ENCODE measurements at regions of chr1 and their contacts with region 1.

Region 1: GRCh38 chr1:19430121-19431068 is 54.9 kb downstream of the CAPZB start:
- DNase-seq: peak; percentile 59
- H3K4me3 ChIP-seq: no peak overlapping the region
- H3K27ac ChIP-seq: peak overlapping the region; percentile 23
- H3K4me1 ChIP-seq: peaks cover 23% of the 10 kb centered on the region
- H3K27me3 ChIP-seq: no peaks in the 10 kb centered on the region
- CTCF ChIP-seq: no peak

Region 2: DNA sequence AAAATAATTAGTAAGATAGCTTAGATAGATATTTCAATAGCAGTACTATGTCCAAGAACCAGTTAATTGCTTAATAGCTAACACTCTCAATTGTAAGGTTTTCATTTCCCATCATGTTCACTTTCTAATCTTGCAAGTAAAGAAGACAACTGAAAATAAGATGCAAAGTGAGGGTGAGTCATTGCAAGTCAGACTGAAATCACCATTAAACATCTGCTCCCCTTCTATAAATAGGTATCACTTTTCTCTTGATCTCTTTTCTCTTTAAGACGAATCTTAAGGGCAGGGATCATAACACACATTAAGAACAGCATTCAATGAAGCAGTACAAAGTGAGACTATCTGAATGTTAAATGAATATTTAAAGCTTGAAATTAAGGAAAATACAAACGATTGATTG is 260.8 kb before region 1 on chr1:
- CTCF ChIA-PET with region 1: no interaction called
- dilution Hi-C with region 1: no loop called
- in situ Hi-C with region 1: no loop called
- intact Hi-C with region 1: no loop called
- DNase-seq: no peak
- H3K4me3 ChIP-seq: no peak overlapping the region
- H3K27ac ChIP-seq: no peak overlapping the region
- H3K4me1 ChIP-seq: no peaks in the 10 kb centered on the region
- H3K27me3 ChIP-seq: no peaks in the 10 kb centered on the region
- CTCF ChIP-seq: no peak

Region 3: GRCh38 chr1:19361611-19362147 is 68.7 kb before region 1 on chr1:
- CTCF ChIA-PET with region 1: no interaction called
- dilution Hi-C with region 1: no loop called
- in situ Hi-C with region 1: no loop called
- intact Hi-C with region 1: no loop called
- DNase-seq: peak; percentile 58
- H3K4me3 ChIP-seq: no peak overlapping the region
- H3K27ac ChIP-seq: peak overlapping the region; percentile 67
- H3K4me1 ChIP-seq: peaks cover 58% of the 10 kb centered on the region
- H3K27me3 ChIP-seq: no peaks in the 10 kb centered on the region
- CTCF ChIP-seq: no peak

Region 4: GRCh38 chr1:19398309-19398760 is 32.1 kb before region 1 on chr1:
- CTCF ChIA-PET with region 1: no interaction called
- dilution Hi-C with region 1: loop called (anchors 5 kb)
- in situ Hi-C with region 1: no loop called
- intact Hi-C with region 1: no loop called
- DNase-seq: peak; percentile 45
- H3K4me3 ChIP-seq: no peak overlapping the region
- H3K27ac ChIP-seq: no peak overlapping the region
- H3K4me1 ChIP-seq: peaks cover 17% of the 10 kb centered on the region
- H3K27me3 ChIP-seq: no peaks in the 10 kb centered on the region
- CTCF ChIP-seq: peak; percentile 21 to 30

Region 5: GRCh38 chr1:19525607-19526545 is 95.5 kb after region 1 on chr1:
- CTCF ChIA-PET with region 1: no interaction called
- dilution Hi-C with region 1: no loop called
- in situ Hi-C with region 1: no loop called
- intact Hi-C with region 1: no loop called
- DNase-seq: no peak
- H3K4me3 ChIP-seq: no peak overlapping the region
- H3K27ac ChIP-seq: no peak overlapping the region
- H3K4me1 ChIP-seq: no peaks in the 10 kb centered on the region
- H3K27me3 ChIP-seq: no peaks in the 10 kb centered on the region
- CTCF ChIP-seq: no peak

Measured in mammary epithelial cell (primary cell).